MCF 10A (cell line): ENCODE measurements at regions of chr4 and their contacts with region 1.

Region 1: DNA sequence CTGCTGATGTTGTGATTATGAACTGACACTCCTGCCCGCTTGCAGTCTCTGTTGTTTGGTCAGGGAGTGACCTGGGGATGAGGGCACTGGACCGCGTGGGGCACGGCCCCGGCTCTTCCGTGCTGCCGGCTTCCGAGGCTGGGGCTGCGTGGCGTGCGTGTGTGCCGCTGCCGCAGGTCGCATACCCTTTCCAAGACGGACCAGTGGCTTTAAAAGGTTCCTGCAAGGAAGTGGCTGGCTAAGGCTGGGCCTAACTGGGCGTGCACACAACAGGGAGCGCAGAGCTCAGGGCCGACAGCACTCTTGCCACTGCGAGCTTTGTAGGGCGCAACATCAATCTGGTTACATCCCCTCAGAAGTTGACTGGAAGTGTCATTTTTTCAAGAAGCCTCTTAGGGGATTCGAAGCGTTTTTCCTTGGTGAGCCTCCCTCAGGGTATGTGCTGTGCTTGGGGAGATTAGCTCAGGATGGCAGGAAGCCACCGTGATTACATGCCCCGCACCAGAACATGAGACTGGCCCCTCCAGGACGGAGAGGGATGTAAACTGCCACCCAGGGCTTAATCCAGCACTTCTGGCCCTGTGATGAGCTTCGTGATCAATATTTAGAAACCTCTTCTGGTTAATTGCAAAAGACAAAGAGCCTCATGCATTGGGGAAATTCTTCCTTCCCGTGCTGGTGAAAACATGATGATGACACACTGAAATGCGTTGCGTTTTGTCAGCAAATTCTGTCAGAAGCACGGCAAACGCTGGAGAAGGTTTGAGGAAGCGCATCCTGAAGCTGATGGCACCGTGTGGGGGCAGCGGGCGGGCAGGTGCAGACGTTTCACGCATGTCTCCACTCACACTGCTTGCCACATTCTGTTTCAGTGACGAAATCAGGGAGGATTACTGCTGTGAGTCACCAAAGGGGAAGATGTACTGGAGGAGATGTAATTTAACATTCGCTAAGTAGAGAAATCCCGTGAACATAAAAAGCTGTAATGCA is 11.1 kb downstream of the MAEA start:
- DNase-seq: peak; percentile 96
- H3K4me3 Mint-ChIP-seq: peak overlapping the region; percentile 4
- H3K27ac Mint-ChIP-seq: peak overlapping the region; percentile 70
- H3K4me1 Mint-ChIP-seq: peaks cover 47% of the 10 kb centered on the region
- H3K27me3 Mint-ChIP-seq: no peaks in the 10 kb centered on the region
- CTCF ChIP-seq: no peak

Region 2: GRCh38 chr4:1239141-1239949 is 61.4 kb before region 1 on chr4:
- CTCF ChIA-PET with region 1: no interaction called
- POLR2A ChIA-PET with region 1: no interaction called
- intact Hi-C with region 1: no loop called
- DNase-seq: no peak
- H3K4me3 Mint-ChIP-seq: no peak overlapping the region
- H3K27ac Mint-ChIP-seq: no peak overlapping the region
- H3K4me1 Mint-ChIP-seq: no peaks in the 10 kb centered on the region
- H3K27me3 Mint-ChIP-seq: no peaks in the 10 kb centered on the region
- CTCF ChIP-seq: no peak

Region 3: DNA sequence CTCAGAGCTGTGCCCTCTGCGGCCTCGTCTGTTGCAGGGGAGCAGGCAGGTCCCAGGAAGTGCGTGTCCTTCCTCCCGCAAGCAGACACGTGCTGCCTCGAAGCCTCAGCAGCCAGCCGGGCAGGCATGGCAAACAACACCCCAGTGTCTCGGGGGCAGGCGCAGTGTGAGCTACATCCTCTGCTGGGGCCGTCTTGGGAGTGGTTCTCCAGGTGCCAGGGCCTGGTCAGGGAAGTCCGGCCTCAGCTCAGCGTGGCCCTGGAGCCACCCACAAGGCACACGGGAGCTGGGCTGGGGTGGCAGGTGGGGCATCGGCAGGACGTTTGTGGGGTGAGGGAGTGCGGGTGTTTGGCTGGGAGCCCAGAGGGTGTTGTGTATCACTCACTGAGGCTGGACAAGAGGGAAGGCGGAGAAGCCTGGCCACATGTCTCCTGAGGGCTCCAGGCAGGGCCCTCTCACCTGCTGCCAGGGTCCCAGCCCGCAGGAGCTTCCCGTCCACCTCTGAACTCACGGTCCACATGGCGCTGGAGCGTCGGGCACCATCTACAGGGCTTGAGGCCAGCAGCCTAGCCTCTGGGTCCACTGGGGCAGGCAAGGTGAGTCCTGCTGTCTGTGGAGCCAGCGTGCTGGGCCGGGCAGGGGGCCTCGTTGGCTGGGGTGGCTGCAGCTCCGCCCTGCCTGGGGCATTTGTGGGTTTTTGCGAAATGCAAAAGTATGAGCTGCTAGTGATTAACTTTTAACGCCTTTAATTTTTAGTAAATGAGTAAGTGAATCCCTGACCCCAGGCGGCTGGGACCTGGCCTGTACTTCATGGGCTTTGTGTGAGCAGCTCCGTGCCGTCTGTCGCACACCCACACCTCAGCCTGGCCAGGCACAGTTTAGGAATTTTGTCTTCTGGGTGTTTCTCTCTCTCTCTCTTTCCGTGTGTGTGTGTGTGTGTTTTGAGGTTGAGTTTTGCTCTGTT is 28.9 kb after region 1 on chr4:
- CTCF ChIA-PET with region 1: interaction called, 4 read pairs
- POLR2A ChIA-PET with region 1: interaction called, 29 read pairs
- intact Hi-C with region 1: no loop called
- DNase-seq: peak; percentile 85
- H3K4me3 Mint-ChIP-seq: peak overlapping the region; percentile 57
- H3K27ac Mint-ChIP-seq: peak overlapping the region; percentile 95
- H3K4me1 Mint-ChIP-seq: peaks cover 22% of the 10 kb centered on the region
- H3K27me3 Mint-ChIP-seq: no peaks in the 10 kb centered on the region
- CTCF ChIP-seq: no peak